ENCODE measurements at regions of chr12 and their contacts with region 1.

Region 1: DNA sequence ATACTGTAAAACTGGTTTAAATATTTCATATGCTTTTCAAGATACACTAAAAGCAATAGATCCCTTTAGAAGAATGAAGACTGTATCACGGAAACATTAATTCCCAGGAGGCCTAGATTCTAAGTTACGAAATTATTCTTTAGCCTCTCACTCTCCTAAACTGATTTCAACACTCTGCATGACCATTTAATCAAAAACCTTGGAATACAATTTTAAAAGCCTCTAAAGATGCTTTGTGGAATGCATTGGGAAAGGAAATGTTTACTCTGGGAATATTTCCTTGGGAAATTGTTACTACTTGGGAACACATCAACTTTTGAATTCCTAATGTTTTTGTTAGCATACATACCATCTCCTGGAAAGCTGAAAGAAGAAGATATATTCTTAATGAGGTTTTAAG is 255.7 kb upstream of the FAR2 start:
- DNase-seq: no peak
- H3K4me3 ChIP-seq: no peak overlapping the region
- CTCF ChIP-seq: no peak
- POLR2A ChIP-seq: no peak

Region 2: GRCh38 chr12:28710882-28711281 is 182.5 kb before region 1 on chr12:
- intact Hi-C with region 1: loop called (anchors 5 kb)
- DNase-seq: no peak
- H3K4me3 ChIP-seq: no peak overlapping the region
- CTCF ChIP-seq: no peak
- POLR2A ChIP-seq: no peak